ENCODE measurements at regions of chr5 and their contacts with region 1.

Region 1: GRCh38 chr5:86880785-86881492 is 263.2 kb downstream of the COX7C start:
- DNase-seq: peak; percentile 66
- ATAC-seq: peak; percentile 99
- H3K4me3 Mint-ChIP-seq: no peak overlapping the region
- H3K27ac Mint-ChIP-seq: no peak overlapping the region
- H3K4me1 Mint-ChIP-seq: peaks cover 25% of the 10 kb centered on the region
- H3K27me3 Mint-ChIP-seq: no peaks in the 10 kb centered on the region
- CTCF ChIP-seq: peak; percentile 70

Region 2: GRCh38 chr5:85951707-85952210 is 929.2 kb before region 1 on chr5:
- CTCF ChIA-PET with region 1: no interaction called
- POLR2A ChIA-PET with region 1: no interaction called
- DNase-seq: no peak
- ATAC-seq: no peak; the same call in 1 of the 2 replicates
- H3K4me3 Mint-ChIP-seq: no peak overlapping the region
- H3K27ac Mint-ChIP-seq: no peak overlapping the region; the same call in 1 of the 2 replicates
- H3K4me1 Mint-ChIP-seq: peaks cover 14% of the 10 kb centered on the region
- H3K27me3 Mint-ChIP-seq: no peaks in the 10 kb centered on the region
- CTCF ChIP-seq: no peak

Region 3: GRCh38 chr5:86684222-86684621 is 196.7 kb before region 1 on chr5:
- CTCF ChIA-PET with region 1: no interaction called
- POLR2A ChIA-PET with region 1: no interaction called
- DNase-seq: no peak
- ATAC-seq: no peak
- H3K4me3 Mint-ChIP-seq: no peak overlapping the region
- H3K27ac Mint-ChIP-seq: no peak overlapping the region
- H3K4me1 Mint-ChIP-seq: no peaks in the 10 kb centered on the region
- H3K27me3 Mint-ChIP-seq: no peaks in the 10 kb centered on the region
- CTCF ChIP-seq: no peak

Region 4: GRCh38 chr5:86909456-86910295 is 28.7 kb after region 1 on chr5:
- CTCF ChIA-PET with region 1: no interaction called
- POLR2A ChIA-PET with region 1: no interaction called
- DNase-seq: no peak
- ATAC-seq: no peak
- H3K4me3 Mint-ChIP-seq: no peak overlapping the region
- H3K27ac Mint-ChIP-seq: no peak overlapping the region
- H3K4me1 Mint-ChIP-seq: no peaks in the 10 kb centered on the region
- H3K27me3 Mint-ChIP-seq: no peaks in the 10 kb centered on the region
- CTCF ChIP-seq: no peak

Region 5: DNA sequence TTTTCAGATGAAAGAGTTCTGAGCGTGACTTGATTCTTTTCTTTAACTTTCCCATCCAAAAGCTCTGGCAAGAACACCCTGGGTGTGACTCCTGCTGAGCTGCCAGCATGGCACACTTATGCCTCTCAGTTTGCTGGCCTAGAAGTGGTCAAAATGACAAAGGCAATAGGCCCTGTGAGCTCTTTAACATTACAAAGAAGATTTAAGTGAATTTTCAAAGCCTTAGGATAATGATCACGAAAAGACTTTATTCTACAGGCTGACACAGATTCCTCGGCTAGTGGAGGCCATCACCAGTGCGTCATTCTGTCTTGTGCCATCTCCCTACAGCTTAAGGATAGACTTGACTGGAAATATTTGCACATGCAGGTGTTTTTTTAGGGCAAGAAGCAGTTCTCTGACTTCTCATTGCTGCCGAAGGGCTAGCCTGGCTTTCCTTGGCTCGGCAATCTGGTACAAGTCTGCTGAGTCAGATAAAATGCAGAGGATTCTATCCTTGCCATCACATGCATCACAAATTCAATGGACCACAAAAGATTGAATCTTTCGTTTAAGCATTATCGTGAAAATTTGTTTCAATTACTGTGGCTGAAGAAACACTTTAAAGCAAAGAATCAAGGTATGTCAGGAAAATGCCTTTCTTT is 48.3 kb after region 1 on chr5:
- CTCF ChIA-PET with region 1: interaction called, 12 read pairs
- POLR2A ChIA-PET with region 1: no interaction called
- DNase-seq: peak; percentile 57
- ATAC-seq: peak; percentile 97
- H3K4me3 Mint-ChIP-seq: peak overlapping the region; percentile 35
- H3K27ac Mint-ChIP-seq: no peak overlapping the region
- H3K4me1 Mint-ChIP-seq: peaks cover 30% of the 10 kb centered on the region
- H3K27me3 Mint-ChIP-seq: peaks cover 42% of the 10 kb centered on the region
- CTCF ChIP-seq: no peak

Region 6: DNA sequence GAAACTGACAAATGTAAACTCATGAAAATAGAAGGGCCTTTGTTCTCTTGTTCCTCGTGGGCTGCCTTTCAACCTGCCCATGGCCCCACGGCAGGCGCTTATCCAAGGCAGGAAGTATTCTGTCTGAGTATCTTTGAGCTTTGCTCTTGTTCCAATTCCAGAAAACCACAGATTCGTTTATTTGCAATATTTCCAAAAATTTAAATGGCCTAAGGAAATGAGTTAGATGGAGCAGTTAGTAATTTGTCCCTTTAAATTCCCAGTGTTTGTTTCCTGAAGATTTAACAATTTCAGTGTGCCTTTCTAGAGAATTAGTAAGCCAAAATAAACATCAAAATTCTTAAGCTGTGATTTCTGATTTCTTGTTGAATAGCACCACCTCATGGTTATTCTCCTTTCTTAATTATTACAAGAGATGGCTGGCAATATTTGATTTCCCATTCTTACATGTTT is 87.4 kb after region 1 on chr5:
- CTCF ChIA-PET with region 1: interaction called, 71 read pairs
- POLR2A ChIA-PET with region 1: no interaction called
- DNase-seq: no peak
- ATAC-seq: peak; percentile 38; the same call in 1 of the 2 replicates
- H3K4me3 Mint-ChIP-seq: no peak overlapping the region
- H3K27ac Mint-ChIP-seq: 0 out of 2 replicates have a peak overlapping the region, but pooled peaks have one; percentile 27
- H3K4me1 Mint-ChIP-seq: peaks cover 8% of the 10 kb centered on the region
- H3K27me3 Mint-ChIP-seq: no peaks in the 10 kb centered on the region
- CTCF ChIP-seq: no peak

Region 7: DNA sequence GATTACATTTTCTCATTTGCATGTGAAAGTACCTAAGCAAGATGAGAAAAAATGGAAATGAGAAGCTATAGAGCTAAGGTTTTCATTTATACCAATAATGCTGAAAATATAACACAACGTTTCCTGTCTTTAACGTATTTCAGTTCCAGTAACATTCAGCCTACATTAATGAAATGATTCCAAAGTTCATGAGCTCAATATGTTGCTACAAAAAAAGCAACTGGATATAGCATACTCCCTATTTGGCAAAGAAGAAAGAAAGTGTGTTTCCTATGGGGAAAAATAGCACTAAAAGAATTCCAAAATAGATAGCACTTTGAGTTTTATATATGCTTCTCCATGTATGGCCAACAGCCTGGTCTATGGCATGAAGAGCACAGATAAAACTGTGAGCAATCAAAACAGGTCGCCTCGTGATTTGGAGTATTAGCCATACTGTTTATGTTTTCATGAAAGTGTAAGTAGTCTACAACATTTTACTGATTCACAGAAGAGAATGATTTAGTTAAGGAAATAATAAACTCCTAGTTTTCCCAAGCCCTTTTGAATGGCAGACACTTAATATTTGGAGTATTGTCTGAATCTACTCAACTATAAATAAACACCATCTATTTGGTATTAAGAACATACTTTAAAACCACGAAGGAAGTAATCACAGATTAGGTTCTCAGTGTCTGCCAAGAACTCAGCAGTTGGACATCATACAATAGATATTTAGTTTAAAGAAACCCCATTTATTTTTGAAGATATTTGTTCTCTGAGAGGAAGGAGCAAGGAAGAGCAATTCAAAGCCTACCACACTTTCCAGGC is 128.0 kb after region 1 on chr5:
- CTCF ChIA-PET with region 1: interaction called, 14 read pairs
- POLR2A ChIA-PET with region 1: no interaction called
- DNase-seq: no peak
- ATAC-seq: no peak
- H3K4me3 Mint-ChIP-seq: no peak overlapping the region
- H3K27ac Mint-ChIP-seq: no peak overlapping the region
- H3K4me1 Mint-ChIP-seq: no peaks in the 10 kb centered on the region
- H3K27me3 Mint-ChIP-seq: no peaks in the 10 kb centered on the region
- CTCF ChIP-seq: no peak

Measured in WTC11 (cell line).